Colonic mucosa (tissue), 4 donors: ENCODE measurements at regions of chr2 and their contacts with region 1.

Region 1: GRCh38 chr2:43226558-43226954 is at the start of gene ZFP36L2:
- DNase-seq: peak; percentile 97
- H3K4me3 ChIP-seq: peak within 1 kb of the TSS; percentile 88
- H3K27ac ChIP-seq: peak within 1 kb of the TSS; percentile 97
- H3K4me1 ChIP-seq: peaks cover 14% of the 10 kb centered on the region
- H3K27me3 ChIP-seq: no peaks in the 10 kb centered on the region
- CTCF ChIP-seq: no peak
- total RNA-seq, gene ZFP36L2: 166 to 205 TPM

Region 2: GRCh38 chr2:42944779-42945415 is 281.7 kb before region 1 on chr2:
- intact Hi-C with region 1: loop called (anchors 5 kb)
- DNase-seq: no peak
- H3K4me3 ChIP-seq: no peak overlapping the region
- H3K27ac ChIP-seq: no peak overlapping the region
- H3K4me1 ChIP-seq: no peaks in the 10 kb centered on the region
- H3K27me3 ChIP-seq: no peaks in the 10 kb centered on the region
- CTCF ChIP-seq: no peak

Region 3: GRCh38 chr2:42974721-42975717 is 251.5 kb before region 1 on chr2:
- intact Hi-C with region 1: loop called (anchors 2 kb)
- DNase-seq: peak; percentile 86
- H3K4me3 ChIP-seq: peak overlapping the region; percentile 19
- H3K27ac ChIP-seq: peak overlapping the region; percentile 30
- H3K4me1 ChIP-seq: peaks cover 6% of the 10 kb centered on the region
- H3K27me3 ChIP-seq: no peaks in the 10 kb centered on the region
- CTCF ChIP-seq: peak; percentile 86

Region 4: DNA sequence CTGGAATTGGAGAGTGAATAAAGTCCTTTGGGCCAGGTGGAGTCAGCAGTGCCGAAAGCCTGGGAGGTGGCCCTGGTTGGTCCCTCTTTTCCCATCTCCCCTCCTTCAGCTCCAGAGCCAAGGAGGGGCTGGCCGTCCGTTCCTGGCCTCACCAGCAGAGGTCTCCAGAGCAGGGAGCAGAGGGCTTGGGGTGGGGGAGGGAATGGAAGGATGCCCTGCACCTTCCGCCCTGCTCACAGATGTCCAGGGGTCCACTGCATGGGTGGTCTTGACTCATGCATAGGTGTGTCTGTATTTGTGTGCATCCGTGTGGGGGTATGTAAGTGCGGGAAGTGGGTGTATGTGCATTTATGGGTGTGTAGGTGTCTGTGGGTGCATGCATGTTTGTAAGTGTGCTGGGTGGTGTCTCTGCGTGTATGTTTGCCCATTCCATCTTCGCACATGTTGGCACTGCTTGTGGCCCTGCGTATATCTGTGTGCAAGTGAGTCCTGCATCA is 202.0 kb before region 1 on chr2:
- intact Hi-C with region 1: loop called (anchors 5 kb)
- DNase-seq: peak; percentile 83
- H3K4me3 ChIP-seq: no peak overlapping the region
- H3K27ac ChIP-seq: no peak overlapping the region
- H3K4me1 ChIP-seq: no peaks in the 10 kb centered on the region
- H3K27me3 ChIP-seq: no peaks in the 10 kb centered on the region
- CTCF ChIP-seq: peak; percentile 82

Region 5: GRCh38 chr2:43131024-43131889 is 95.3 kb before region 1 on chr2:
- intact Hi-C with region 1: loop called (anchors 2 kb)
- DNase-seq: peak; percentile 85
- H3K4me3 ChIP-seq: no peak overlapping the region
- H3K27ac ChIP-seq: peak overlapping the region; percentile 63
- H3K4me1 ChIP-seq: peaks cover 36% of the 10 kb centered on the region
- H3K27me3 ChIP-seq: no peaks in the 10 kb centered on the region
- CTCF ChIP-seq: peak; percentile 33

Region 6: GRCh38 chr2:43161650-43162510 is 64.7 kb before region 1 on chr2:
- intact Hi-C with region 1: loop called (anchors 2 kb)
- DNase-seq: peak; percentile 91
- H3K4me3 ChIP-seq: no peak overlapping the region
- H3K27ac ChIP-seq: peak overlapping the region; percentile 97
- H3K4me1 ChIP-seq: peaks cover 28% of the 10 kb centered on the region
- H3K27me3 ChIP-seq: no peaks in the 10 kb centered on the region
- CTCF ChIP-seq: no peak

Region 7: DNA sequence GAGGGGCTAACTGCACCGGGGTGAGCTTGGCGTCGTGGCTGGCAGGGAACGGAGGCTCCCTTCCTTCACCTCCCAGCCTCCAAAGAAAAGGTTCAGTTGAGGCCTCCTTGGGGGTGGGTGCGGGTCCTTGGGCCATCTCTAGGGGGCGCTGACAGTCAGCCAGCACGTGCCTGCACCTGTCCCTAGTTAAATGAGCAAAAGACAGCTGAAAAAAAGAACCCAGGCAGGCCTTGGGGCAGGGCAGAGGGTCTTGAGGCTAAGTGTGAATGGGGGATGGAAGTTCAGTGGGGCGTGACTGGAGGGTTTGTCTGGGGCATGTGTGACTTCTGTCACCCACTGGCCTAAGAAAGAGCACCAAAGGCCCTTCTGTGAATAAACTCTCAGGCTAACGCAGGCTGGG is 56.6 kb before region 1 on chr2:
- intact Hi-C with region 1: loop called (anchors 2 kb)
- DNase-seq: peak; percentile 84
- H3K4me3 ChIP-seq: no peak overlapping the region
- H3K27ac ChIP-seq: peak overlapping the region; percentile 96
- H3K4me1 ChIP-seq: peaks cover 23% of the 10 kb centered on the region
- H3K27me3 ChIP-seq: no peaks in the 10 kb centered on the region
- CTCF ChIP-seq: peak; percentile 76

Region 8: DNA sequence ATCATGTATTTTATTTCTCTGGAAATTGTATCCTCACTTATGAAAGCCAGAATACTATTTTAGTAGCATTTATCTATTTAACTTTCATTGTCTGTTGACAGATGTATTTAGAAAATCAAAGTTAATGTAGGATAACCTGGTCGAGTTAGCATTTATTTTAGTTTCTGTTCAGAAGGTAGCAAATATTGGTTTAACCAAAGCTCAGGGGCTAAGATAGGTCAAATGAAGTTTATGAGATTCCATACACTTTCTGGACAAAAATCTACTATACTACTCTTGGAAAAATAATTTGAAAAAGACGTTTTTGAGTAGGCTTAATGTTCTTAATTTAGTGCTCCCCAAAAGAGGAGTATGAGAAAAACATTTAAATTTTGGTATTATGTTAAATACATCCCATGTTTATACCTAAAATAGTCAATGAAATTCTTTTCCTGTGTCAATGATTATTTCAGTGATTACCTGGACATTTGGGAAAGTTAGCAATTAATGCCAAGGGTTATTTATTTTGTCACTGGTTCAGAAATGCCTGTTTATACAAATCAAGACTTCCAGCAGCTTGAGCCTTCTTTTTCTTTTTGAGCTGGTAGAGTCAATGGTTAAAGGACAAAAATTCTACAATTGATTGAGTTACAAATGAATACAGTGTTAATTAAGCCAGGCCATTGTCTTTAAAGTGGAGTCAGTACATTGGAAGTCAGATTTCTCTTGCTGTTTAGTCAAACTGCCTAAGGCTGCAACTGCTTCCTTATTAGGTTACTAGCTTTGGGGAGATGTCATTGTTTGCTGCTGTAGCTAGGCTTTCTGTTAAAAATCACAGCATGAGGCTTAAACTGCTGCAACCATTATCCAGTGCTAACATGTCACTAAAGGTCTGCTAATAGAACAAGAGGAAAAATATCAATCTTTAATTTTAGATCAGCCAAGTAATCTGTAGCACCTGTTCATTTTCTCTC is 1317.5 kb after region 1 on chr2:
- intact Hi-C with region 1: no loop called
- DNase-seq: no peak
- H3K4me3 ChIP-seq: no peak overlapping the region
- H3K27ac ChIP-seq: no peak overlapping the region
- H3K4me1 ChIP-seq: no peaks in the 10 kb centered on the region
- H3K27me3 ChIP-seq: no peaks in the 10 kb centered on the region
- CTCF ChIP-seq: no peak